AG04450 (cell line): ENCODE measurements at regions of chr14 and their contacts with region 1.

Region 1: GRCh38 chr14:21255385-21256101 is 13.7 kb downstream of the HNRNPC start:
- DNase-seq: no peak
- H3K4me3 ChIP-seq: no peak overlapping the region
- H3K27ac ChIP-seq: no peak overlapping the region
- H3K27me3 ChIP-seq: no peaks in the 10 kb centered on the region
- CTCF ChIP-seq: no peak

Region 2: GRCh38 chr14:21241218-21241819 is 14.2 kb before region 1 on chr14:
- CTCF ChIA-PET with region 1: interaction called, 18 read pairs
- POLR2A ChIA-PET with region 1: interaction called, 5 read pairs
- DNase-seq: peak; percentile 11
- H3K4me3 ChIP-seq: no peak overlapping the region
- H3K27ac ChIP-seq: no peak overlapping the region
- H3K27me3 ChIP-seq: no peaks in the 10 kb centered on the region
- CTCF ChIP-seq: peak; percentile 44